IMR-90 (cell line): ENCODE measurements at regions of chr17 and their contacts with region 1.

Region 1: GRCh38 chr17:82528484-82529265 is 9.1 kb downstream of the FOXK2 start:
- DNase-seq: peak; percentile 24
- ATAC-seq: no peak
- H3K4me3 ChIP-seq: no peak overlapping the region
- H3K27ac ChIP-seq: no peak overlapping the region
- H3K4me1 ChIP-seq: peaks cover 13% of the 10 kb centered on the region
- H3K27me3 ChIP-seq: no peaks in the 10 kb centered on the region
- CTCF ChIP-seq: peak; percentile 28; the same call in 1 of the 2 replicates
- POLR2A ChIP-seq: no peak
- RAD21 ChIP-seq: peak; percentile 31; the same call in 1 of the 2 replicates

Region 2: DNA sequence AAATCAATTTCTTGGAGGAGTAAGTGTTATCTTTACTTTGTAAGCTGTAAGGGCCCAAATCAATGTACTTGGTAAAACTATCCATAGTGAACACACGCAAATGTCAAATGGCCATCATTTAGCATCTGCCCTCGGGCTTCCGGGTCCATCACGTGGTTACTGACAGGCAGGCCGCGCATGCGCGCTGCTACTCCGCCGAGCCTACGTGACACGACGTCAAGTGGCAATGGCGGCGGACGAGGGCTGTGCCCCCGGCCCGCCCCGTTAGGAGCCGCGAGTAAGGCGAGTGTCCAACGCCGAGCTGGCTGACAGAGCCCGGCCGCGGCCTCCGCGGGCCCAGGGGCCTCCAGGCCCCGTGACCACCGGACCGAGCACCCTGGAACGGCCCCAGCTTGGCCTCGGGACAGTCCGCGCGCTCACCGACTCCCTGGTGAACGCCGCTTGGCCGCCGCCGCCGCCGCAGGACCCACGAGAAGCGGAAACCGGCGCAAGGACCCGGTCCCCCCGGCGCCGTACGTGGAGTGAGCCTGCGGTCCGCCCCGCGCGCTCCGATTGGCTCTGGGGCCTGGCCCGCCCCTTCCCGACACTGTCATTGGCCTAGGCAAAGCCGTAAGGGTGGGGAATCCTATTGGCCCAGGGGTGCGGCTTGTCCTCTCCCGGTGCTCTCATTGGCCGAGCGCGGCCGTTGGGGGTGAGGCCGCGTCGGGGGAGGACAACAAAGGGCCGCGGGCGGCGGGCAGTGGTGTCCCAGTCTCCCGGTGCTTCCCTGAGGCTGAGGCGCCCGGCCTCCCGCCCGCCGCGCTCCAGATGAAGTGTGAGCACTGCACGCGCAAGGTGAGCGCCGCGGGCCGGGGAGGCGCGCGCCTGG is 70.4 kb before region 1 on chr17 and contains the start of gene NARF:
- CTCF ChIA-PET with region 1: interaction called, 4 read pairs
- POLR2A ChIA-PET with region 1: no interaction called
- dilution Hi-C with region 1: no loop called
- in situ Hi-C with region 1: no loop called
- intact Hi-C with region 1: loop called (anchors 1 kb)
- DNase-seq: peak; percentile 98
- ATAC-seq: peak; percentile 99
- H3K4me3 ChIP-seq: peak within 1 kb of the TSS; percentile 74
- H3K27ac ChIP-seq: peak within 1 kb of the TSS; percentile 86
- H3K4me1 ChIP-seq: peaks cover 3% of the 10 kb centered on the region
- H3K27me3 ChIP-seq: no peaks in the 10 kb centered on the region
- CTCF ChIP-seq: no peak
- POLR2A ChIP-seq: peak; percentile 98
- RAD21 ChIP-seq: no peak
- total RNA-seq, gene NARF: 70.8 and 83.7 TPM in 2 replicates

Region 3: GRCh38 chr17:82494236-82495055 is 34.2 kb before region 1 on chr17:
- CTCF ChIA-PET with region 1: no interaction called
- POLR2A ChIA-PET with region 1: no interaction called
- dilution Hi-C with region 1: no loop called
- in situ Hi-C with region 1: no loop called
- intact Hi-C with region 1: loop called (anchors 5 kb)
- DNase-seq: peak; percentile 97
- ATAC-seq: peak; percentile 84
- H3K4me3 ChIP-seq: no peak overlapping the region
- H3K27ac ChIP-seq: no peak overlapping the region
- H3K4me1 ChIP-seq: peaks cover 11% of the 10 kb centered on the region
- H3K27me3 ChIP-seq: no peaks in the 10 kb centered on the region
- CTCF ChIP-seq: peak; percentile 97
- POLR2A ChIP-seq: no peak
- RAD21 ChIP-seq: no peak; the same call in 1 of the 2 replicates

Region 4: DNA sequence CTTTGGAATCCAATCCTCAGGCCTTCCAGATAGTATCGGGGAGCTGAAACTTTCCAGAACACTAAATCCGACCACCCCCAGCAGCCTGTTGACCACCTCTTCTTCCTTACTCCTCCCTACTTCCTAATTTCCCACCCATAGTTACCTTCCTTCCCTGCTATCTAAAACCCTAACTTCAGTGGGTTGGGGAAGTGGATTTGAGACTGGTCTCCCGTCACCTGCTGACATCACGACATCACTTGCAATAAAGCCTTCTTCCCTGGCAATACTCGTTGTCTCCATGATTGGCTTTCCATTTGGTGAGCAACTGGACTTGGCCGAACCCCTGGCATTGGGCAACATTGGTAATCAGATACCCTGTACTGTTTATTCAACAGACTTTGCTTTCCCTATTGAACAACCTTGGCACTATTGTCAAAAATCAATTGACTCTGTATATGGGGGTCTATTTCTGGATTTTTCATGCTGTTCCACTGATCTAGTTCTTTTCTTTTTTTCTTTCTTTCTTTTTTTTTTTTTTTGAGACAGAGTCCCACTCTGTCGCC is 21.0 kb before region 1 on chr17:
- CTCF ChIA-PET with region 1: no interaction called
- POLR2A ChIA-PET with region 1: no interaction called
- dilution Hi-C with region 1: no loop called
- in situ Hi-C with region 1: no loop called
- intact Hi-C with region 1: loop called (anchors 1 kb)
- DNase-seq: no peak
- ATAC-seq: no peak
- H3K4me3 ChIP-seq: no peak overlapping the region
- H3K27ac ChIP-seq: no peak overlapping the region
- H3K4me1 ChIP-seq: no peaks in the 10 kb centered on the region
- H3K27me3 ChIP-seq: no peaks in the 10 kb centered on the region; the same call in 1 of the 2 replicates
- CTCF ChIP-seq: no peak
- POLR2A ChIP-seq: no peak
- RAD21 ChIP-seq: no peak

Region 5: DNA sequence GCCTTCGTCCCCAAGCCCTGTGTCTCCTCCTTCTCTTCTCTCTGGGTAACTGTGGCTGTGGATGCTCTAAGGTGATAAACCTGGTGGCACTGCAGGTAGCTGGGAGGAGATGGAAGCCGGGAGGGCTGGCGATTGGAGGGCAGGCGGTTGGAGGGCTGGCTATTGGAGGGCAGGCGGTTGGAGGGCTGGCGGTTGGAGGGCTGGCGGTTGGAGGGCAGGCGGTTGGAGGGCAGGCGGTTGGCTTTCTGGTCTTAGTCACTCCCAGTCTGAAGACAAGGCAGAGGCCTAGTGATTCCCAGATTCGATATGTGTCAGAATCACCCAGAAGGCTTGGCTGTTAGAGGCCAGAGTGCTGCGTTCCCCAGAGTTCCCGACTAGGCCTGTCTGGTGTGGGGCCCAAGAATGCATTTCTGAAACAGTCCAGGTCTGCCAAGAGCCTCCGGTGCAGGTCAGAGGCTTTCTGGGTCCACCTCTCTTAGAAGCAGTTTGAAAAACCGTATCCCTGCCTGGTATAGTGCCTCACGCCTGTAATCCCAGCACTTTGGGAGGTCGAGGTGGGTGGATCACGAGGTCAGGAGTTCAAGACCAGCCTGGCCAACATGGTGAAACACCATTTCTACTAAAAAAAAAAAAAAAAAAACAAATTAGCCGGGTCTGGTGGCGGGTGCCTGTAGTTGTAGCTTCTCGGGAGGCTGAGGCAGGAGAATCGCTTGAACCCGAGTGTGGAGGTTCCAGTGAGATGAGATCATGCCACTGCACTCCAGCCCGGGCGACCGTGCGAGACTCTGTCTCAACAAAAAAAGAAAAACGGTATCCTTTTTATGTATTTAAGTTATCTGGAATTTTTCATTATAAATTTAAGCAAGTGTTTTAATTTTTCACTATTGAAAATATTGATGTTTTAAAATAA is 59.8 kb after region 1 on chr17:
- CTCF ChIA-PET with region 1: no interaction called
- POLR2A ChIA-PET with region 1: interaction called, 12 read pairs
- dilution Hi-C with region 1: no loop called
- in situ Hi-C with region 1: no loop called
- intact Hi-C with region 1: no loop called
- DNase-seq: no peak
- ATAC-seq: no peak
- H3K4me3 ChIP-seq: no peak overlapping the region
- H3K27ac ChIP-seq: no peak overlapping the region
- H3K4me1 ChIP-seq: peaks cover 3% of the 10 kb centered on the region
- H3K27me3 ChIP-seq: no peaks in the 10 kb centered on the region
- CTCF ChIP-seq: no peak
- POLR2A ChIP-seq: no peak
- RAD21 ChIP-seq: no peak